Heart right ventricle (tissue), 16 donors: ENCODE measurements at regions of chr1 and their contacts with region 1.

Region 1: GRCh38 chr1:32964461-32965250 is at the start of gene RNF19B:
- DNase-seq: peak; percentile 95
- ATAC-seq: peak; percentile 98 to 100 (median 99)
- H3K4me3 ChIP-seq: peak within 1 kb of the TSS; percentile 75 to 98 (median 94)
- H3K27ac ChIP-seq: peak within 1 kb of the TSS; percentile 88 to 98 (median 94)
- H3K4me1 ChIP-seq: peaks cover 0 to 43% (median 33%) of the 10 kb centered on the region in 9 donors
- H3K27me3 ChIP-seq: no peaks in the 10 kb centered on the region
- CTCF ChIP-seq: peak in 7 of 9 donors; percentile 14 to 39 (median 26)
- total RNA-seq, gene RNF19B: 10.2 to 36.9 (median 13.8) TPM

Region 2: DNA sequence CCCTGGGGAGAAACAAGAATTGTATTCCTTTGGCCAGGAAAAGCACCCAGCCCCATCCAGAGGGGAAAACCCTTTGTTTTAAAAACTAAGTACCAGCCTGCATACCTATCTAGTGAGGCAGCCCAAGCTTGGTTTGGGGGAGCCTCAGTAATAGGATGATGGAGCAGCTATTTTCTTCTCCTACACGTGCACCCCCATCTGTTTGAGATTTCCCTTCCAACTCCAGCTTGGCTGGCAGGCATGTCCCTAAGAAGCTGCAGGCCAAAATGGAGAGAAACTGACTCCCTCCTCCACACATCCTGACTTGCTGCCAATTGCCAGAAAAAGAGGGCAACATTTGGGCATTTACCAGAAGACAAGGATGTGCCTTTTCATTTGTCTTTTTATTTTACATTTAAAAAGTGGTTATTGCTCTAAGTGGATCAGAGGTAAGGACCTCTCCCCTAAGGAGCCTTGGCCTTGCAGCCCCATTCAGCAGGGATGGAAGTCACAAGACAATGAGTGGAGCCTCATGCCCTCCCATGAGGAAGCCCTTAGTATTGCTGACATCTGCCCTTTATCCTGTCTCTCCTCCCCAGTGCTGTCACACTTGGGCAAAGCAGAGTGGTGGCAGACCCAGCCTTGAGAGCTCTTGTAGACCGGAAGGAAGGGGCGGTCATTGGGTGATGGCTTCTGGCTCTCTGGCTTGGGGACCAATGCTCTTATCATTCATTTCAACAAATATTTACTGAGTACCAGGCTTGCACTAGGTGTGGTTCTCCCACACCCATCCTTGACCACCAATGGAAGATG is 102.6 kb before region 1 on chr1:
- intact Hi-C with region 1: no loop called
- DNase-seq: no peak
- ATAC-seq: peak in 2 of 8 donors; percentile 14 to 57
- H3K4me3 ChIP-seq: no peak overlapping the region
- H3K27ac ChIP-seq: peak overlapping the region in 4 of 10 donors; percentile 13 to 38 (median 28)
- H3K4me1 ChIP-seq: peaks cover 0 to 62% (median 36%) of the 10 kb centered on the region in 9 donors
- H3K27me3 ChIP-seq: no peaks in the 10 kb centered on the region
- CTCF ChIP-seq: no peak

Region 3: GRCh38 chr1:32989160-32990050 is 24.7 kb after region 1 on chr1:
- intact Hi-C with region 1: loop called in 1 of 10 experiments (anchors 2 kb)
- DNase-seq: peak; percentile 42 to 89
- ATAC-seq: peak; percentile 61 to 87 (median 80)
- H3K4me3 ChIP-seq: no peak overlapping the region
- H3K27ac ChIP-seq: peak overlapping the region in 9 of 10 donors; percentile 17 to 90 (median 66)
- H3K4me1 ChIP-seq: peaks cover 12 to 92% (median 52%) of the 10 kb centered on the region in 9 donors
- H3K27me3 ChIP-seq: no peaks in the 10 kb centered on the region
- CTCF ChIP-seq: no peak

Region 4: GRCh38 chr1:32997381-32997891 is 32.8 kb after region 1 on chr1:
- intact Hi-C with region 1: loop called in 1 of 10 experiments (anchors 5 kb)
- DNase-seq: no peak
- ATAC-seq: peak in 2 of 8 donors; percentile 16 to 34
- H3K4me3 ChIP-seq: no peak overlapping the region
- H3K27ac ChIP-seq: peak overlapping the region in 9 of 10 donors; percentile 6 to 88 (median 44)
- H3K4me1 ChIP-seq: peaks cover 12 to 73% (median 44%) of the 10 kb centered on the region in 9 donors
- H3K27me3 ChIP-seq: no peaks in the 10 kb centered on the region
- CTCF ChIP-seq: no peak

Region 5: GRCh38 chr1:33007190-33008050 is 42.8 kb after region 1 on chr1:
- intact Hi-C with region 1: loop called in 5 of 10 experiments (anchors 2 to 5 kb)
- DNase-seq: peak in 1 of 2 donors; percentile 30
- ATAC-seq: peak in 7 of 8 donors; percentile 31 to 74 (median 56)
- H3K4me3 ChIP-seq: no peak overlapping the region
- H3K27ac ChIP-seq: peak overlapping the region in 4 of 10 donors; percentile 13 to 95 (median 88)
- H3K4me1 ChIP-seq: peaks cover 24 to 99% (median 75%) of the 10 kb centered on the region in 9 donors
- H3K27me3 ChIP-seq: no peaks in the 10 kb centered on the region
- CTCF ChIP-seq: peak in 8 of 9 donors; percentile 29 to 56 (median 54)

Region 6: GRCh38 chr1:33036526-33037503 is 72.2 kb after region 1 on chr1 and contains the start of gene AK2:
- intact Hi-C with region 1: loop called in 2 of 10 experiments (anchors 5 to 10 kb)
- DNase-seq: peak; percentile 96 to 97
- ATAC-seq: peak; percentile 100
- H3K4me3 ChIP-seq: peak within 1 kb of the TSS; percentile 60 to 98 (median 87)
- H3K27ac ChIP-seq: peak within 1 kb of the TSS; percentile 2 to 94 (median 86)
- H3K4me1 ChIP-seq: peaks cover 3 to 59% (median 30%) of the 10 kb centered on the region in 9 donors
- H3K27me3 ChIP-seq: no peaks in the 10 kb centered on the region
- CTCF ChIP-seq: no peak
- total RNA-seq, gene AK2: 93.3 to 154 (median 111) TPM

Region 7: DNA sequence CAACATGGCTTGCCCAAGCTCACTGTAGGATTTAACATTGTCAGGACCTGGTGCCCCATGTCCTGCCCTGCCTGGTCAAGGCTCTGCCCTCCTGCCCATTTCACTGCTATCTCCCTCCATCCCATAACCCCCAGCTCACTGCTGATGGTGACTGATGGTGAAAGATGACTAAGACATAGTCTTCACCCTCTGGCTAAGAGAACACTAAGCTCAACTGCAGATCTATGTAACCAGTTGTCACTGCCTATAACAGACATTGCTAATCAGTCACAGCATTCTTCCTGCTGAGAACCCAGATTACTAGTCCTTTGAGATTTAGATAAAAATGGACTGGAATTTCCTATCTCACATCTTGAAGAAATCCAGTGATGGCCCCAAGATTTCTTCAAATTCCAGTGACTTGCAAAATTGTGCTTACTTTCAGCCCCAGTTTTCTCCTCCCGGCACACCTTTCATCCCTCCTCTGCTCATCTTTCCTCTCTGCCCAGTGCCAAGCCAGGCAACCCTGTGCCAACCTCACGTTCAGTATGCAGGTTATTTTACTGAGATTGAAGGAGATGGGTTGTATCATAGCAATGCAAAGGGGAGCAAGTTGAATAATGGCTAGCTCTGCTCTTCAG is 283.7 kb after region 1 on chr1:
- intact Hi-C with region 1: no loop called
- DNase-seq: no peak
- ATAC-seq: no peak
- H3K4me3 ChIP-seq: no peak overlapping the region
- H3K27ac ChIP-seq: no peak overlapping the region
- H3K4me1 ChIP-seq: no peaks in the 10 kb centered on the region
- H3K27me3 ChIP-seq: no peaks in the 10 kb centered on the region
- CTCF ChIP-seq: no peak